ENCODE measurements at regions of chr20 and their contacts with region 1.

Region 1: DNA sequence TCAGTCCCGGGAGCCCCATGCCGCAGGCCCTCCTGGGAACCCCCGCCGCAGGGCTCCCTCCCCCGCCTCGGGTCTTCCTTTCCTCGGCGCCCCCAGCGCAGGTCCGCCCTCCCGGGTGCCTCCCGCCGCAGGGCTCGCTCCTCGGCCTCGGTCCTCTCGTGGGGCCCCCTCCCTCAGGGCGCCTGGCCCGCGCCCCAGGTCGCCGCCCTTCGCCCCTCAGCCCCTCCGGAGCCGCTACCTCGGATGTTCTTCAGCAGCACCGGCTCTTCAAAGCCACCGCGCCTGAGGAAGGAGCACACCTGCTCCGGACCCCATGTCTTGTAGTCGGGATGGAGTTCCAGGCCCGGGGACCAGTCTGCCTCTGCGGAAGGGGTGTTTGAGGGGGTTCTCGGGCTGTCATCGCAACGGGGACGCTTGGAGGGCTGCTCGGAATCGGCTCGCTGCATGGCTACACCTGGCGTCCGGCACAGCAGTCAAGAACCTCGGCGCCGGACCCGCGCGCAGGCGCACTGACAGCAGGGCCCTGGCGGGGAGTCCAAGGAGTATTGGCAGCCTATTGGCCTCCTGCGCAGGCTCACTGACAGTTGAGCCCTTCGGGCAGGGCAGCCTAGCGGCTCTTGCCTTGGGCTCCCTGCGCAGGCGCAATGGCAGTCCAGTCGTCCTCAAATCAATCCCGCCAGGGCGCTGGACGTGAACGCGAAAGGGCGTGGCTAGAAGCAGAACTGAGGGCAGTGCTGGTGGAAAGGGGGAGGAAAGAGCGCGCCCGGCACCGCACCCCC is at the start of gene SAMHD1:
- DNase-seq: peak; percentile 93
- ATAC-seq: peak; percentile 88
- H3K4me3 Mint-ChIP-seq: peak within 1 kb of the TSS; percentile 91
- H3K27ac Mint-ChIP-seq: peak within 1 kb of the TSS; percentile 91
- H3K4me1 Mint-ChIP-seq: peaks cover 28% of the 10 kb centered on the region
- H3K27me3 Mint-ChIP-seq: no peaks in the 10 kb centered on the region
- total RNA-seq, gene SAMHD1: 222 to 229 TPM

Region 2: GRCh38 chr20:36936341-36936740 is 15.0 kb before region 1 on chr20:
- POLR2A ChIA-PET with region 1: no interaction called
- DNase-seq: no peak
- ATAC-seq: no peak
- H3K4me3 Mint-ChIP-seq: no peak overlapping the region
- H3K27ac Mint-ChIP-seq: no peak overlapping the region
- H3K4me1 Mint-ChIP-seq: peaks cover 50% of the 10 kb centered on the region
- H3K27me3 Mint-ChIP-seq: no peaks in the 10 kb centered on the region

Region 3: DNA sequence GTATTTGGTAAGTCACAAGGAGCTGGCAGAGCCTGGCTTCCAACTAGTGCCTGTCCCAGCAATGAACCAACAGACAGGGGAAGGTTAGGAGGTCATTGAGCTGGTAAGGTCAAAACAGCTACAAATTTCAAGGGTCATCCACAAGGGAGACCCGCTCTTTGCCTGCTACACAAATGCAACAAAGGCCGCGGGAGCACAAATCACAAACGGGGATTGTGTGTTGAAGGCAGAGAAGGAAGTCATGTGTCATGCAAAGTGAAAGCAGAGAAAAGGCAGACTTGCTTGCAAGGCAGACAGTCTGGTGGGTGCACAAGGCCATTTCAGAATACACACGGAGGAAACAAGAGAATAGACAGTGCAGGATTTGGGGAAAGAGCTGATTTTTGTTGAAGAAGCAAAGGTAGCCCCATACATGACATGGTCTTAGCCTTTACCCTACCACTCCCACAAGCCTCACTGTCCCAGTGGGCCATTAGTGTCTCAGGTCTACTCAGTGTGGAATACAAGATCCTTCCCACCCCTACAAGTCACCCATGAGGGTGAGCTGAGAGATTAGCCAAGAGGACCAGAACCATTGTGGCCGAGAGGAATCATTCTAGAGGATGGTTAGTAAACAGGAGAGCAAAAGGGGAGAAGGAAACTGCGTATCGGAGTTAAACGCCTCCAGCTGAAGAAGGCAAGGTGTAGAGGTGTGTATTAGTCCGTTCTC is 18.2 kb after region 1 on chr20:
- POLR2A ChIA-PET with region 1: interaction called, 30 read pairs
- DNase-seq: no peak
- ATAC-seq: peak; percentile 83
- H3K4me3 Mint-ChIP-seq: peak overlapping the region; percentile 39
- H3K27ac Mint-ChIP-seq: peak overlapping the region; percentile 93
- H3K4me1 Mint-ChIP-seq: peaks cover 55% of the 10 kb centered on the region
- H3K27me3 Mint-ChIP-seq: no peaks in the 10 kb centered on the region

Region 4: GRCh38 chr20:36975099-36975818 is 23.9 kb after region 1 on chr20:
- POLR2A ChIA-PET with region 1: interaction called, 30 read pairs
- DNase-seq: peak; percentile 51
- ATAC-seq: peak; percentile 81
- H3K4me3 Mint-ChIP-seq: peak overlapping the region; percentile 65
- H3K27ac Mint-ChIP-seq: peak overlapping the region; percentile 81
- H3K4me1 Mint-ChIP-seq: peaks cover 25% of the 10 kb centered on the region
- H3K27me3 Mint-ChIP-seq: no peaks in the 10 kb centered on the region

Measured in activated naive CD8-positive, alpha-beta T cell treated with anti-CD3 and anti-CD28 coated beads, Interleukin-2, amount 10 ng/mL, durations not matched to agents 7 days and 5 days (primary cell).